PC-9 (cell line): ENCODE measurements at regions of chr7 and their contacts with region 1.

Region 1: GRCh38 chr7:151876899-151877777 is at the start of gene PRKAG2:
- DNase-seq: peak in 1 of 2 experiments; percentile 52
- H3K4me3 ChIP-seq: peak within 1 kb of the TSS; percentile 65
- H3K27ac ChIP-seq: no peak within 1 kb of the TSS
- H3K4me1 ChIP-seq: peaks cover 6% of the 10 kb centered on the region; the same call in 1 of the 2 replicates
- H3K27me3 ChIP-seq: peaks cover 6% of the 10 kb centered on the region; the same call in 1 of the 2 replicates
- CTCF ChIP-seq: no peak; the same call in 1 of the 2 replicates
- total RNA-seq, gene PRKAG2: 32.6 and 37.3 TPM in 2 replicates

Region 2: GRCh38 chr7:151088856-151089699 is 788.1 kb before region 1 on chr7:
- CTCF ChIA-PET with region 1: no interaction called
- POLR2A ChIA-PET with region 1: no interaction called
- intact Hi-C with region 1: no loop called
- DNase-seq: no peak
- H3K4me3 ChIP-seq: peak overlapping the region; percentile 100; the same call in 1 of the 2 replicates
- H3K27ac ChIP-seq: no peak overlapping the region
- H3K4me1 ChIP-seq: peaks cover 28% of the 10 kb centered on the region
- H3K27me3 ChIP-seq: no peaks in the 10 kb centered on the region
- CTCF ChIP-seq: no peak

Region 3: GRCh38 chr7:151570366-151570915 is 306.7 kb before region 1 on chr7:
- CTCF ChIA-PET with region 1: no interaction called
- POLR2A ChIA-PET with region 1: no interaction called
- intact Hi-C with region 1: loop called (anchors 10 kb)
- DNase-seq: no peak
- H3K4me3 ChIP-seq: no peak overlapping the region
- H3K27ac ChIP-seq: no peak overlapping the region
- H3K4me1 ChIP-seq: no peaks in the 10 kb centered on the region
- H3K27me3 ChIP-seq: no peaks in the 10 kb centered on the region
- CTCF ChIP-seq: peak; percentile 86

Region 4: DNA sequence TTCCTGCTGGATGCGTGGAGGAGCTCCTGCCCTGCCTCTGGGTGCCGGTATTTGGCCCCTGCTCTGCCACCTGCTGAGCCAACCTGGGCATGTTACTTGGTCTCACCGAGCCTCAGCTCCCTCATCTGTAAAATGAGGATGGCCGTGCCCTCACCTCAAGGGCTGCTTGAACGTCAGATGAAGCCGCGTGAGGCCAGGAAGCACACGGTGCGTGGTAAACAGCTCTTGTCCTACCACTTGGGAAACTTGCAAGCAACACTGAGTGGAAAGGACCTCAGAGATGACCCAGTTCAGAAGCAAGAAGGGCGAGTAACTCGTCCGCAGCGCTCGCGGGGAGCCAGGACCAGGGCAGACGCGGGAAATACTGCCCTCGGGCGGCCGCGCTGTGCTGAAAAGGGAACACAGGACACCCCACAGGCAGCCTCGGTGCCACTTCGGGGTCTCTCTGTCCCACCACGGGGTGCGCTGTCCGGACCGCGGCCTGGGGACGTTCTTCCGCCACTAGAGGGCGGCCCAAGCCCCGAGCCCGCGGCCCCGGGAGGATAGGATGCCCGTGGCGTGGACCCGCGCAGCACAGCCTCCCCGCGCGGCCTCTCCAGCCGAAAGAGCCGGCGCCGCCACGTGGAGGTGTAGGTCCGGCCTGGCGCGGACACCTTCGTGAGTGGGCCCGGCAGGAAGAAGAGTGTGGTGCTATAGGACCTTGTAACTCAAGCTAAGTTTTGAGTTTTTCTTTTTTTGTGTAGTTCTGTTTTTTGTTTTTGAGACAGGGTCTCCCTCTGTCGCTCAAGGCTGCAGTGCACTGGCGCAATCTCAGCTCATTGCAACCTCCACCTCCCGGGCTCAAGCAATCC is 94.3 kb before region 1 on chr7:
- CTCF ChIA-PET with region 1: no interaction called
- POLR2A ChIA-PET with region 1: no interaction called
- intact Hi-C with region 1: loop called (anchors 2 kb)
- DNase-seq: peak; percentile 65 to 81
- H3K4me3 ChIP-seq: peak overlapping the region; percentile 49
- H3K27ac ChIP-seq: no peak overlapping the region
- H3K4me1 ChIP-seq: peaks cover 5% of the 10 kb centered on the region; the same call in 1 of the 2 replicates
- H3K27me3 ChIP-seq: peaks cover 11% of the 10 kb centered on the region; the same call in 1 of the 2 replicates
- CTCF ChIP-seq: peak; percentile 95

Region 5: GRCh38 chr7:151808400-151809183 is 68.5 kb before region 1 on chr7:
- CTCF ChIA-PET with region 1: interaction called, 3 read pairs
- POLR2A ChIA-PET with region 1: no interaction called
- intact Hi-C with region 1: loop called (anchors 1 kb)
- DNase-seq: peak; percentile 76 to 83
- H3K4me3 ChIP-seq: no peak overlapping the region
- H3K27ac ChIP-seq: no peak overlapping the region
- H3K4me1 ChIP-seq: peaks cover 10% of the 10 kb centered on the region
- H3K27me3 ChIP-seq: peaks cover 6% of the 10 kb centered on the region; the same call in 1 of the 2 replicates
- CTCF ChIP-seq: no peak

Region 6: GRCh38 chr7:151818674-151819537 is 58.2 kb before region 1 on chr7:
- CTCF ChIA-PET with region 1: interaction called, 4 read pairs
- POLR2A ChIA-PET with region 1: no interaction called
- intact Hi-C with region 1: loop called (anchors 2 kb)
- DNase-seq: peak; percentile 93
- H3K4me3 ChIP-seq: no peak overlapping the region
- H3K27ac ChIP-seq: no peak overlapping the region
- H3K4me1 ChIP-seq: peaks cover 24% of the 10 kb centered on the region
- H3K27me3 ChIP-seq: no peaks in the 10 kb centered on the region
- CTCF ChIP-seq: no peak

Region 7: GRCh38 chr7:152025077-152025936 is 148.2 kb after region 1 on chr7 and contains the start of gene GALNT11:
- CTCF ChIA-PET with region 1: interaction called, 3 read pairs
- POLR2A ChIA-PET with region 1: no interaction called
- intact Hi-C with region 1: loop called (anchors 1 kb)
- DNase-seq: peak; percentile 67 to 89
- H3K4me3 ChIP-seq: peak within 1 kb of the TSS; percentile 78
- H3K27ac ChIP-seq: no peak within 1 kb of the TSS
- H3K4me1 ChIP-seq: peaks cover 16% of the 10 kb centered on the region
- H3K27me3 ChIP-seq: no peaks in the 10 kb centered on the region
- CTCF ChIP-seq: peak; percentile 36; the same call in 1 of the 2 replicates
- total RNA-seq, gene GALNT11: 26.3 and 28.8 TPM in 2 replicates